Activated CD4-positive, alpha-beta T cell treated with anti-CD3 and anti-CD28 coated beads, Interleukin-2, amount 10 ng/mL, durations not matched to agents 24 days and 14 days (primary cell): ENCODE measurements at regions of chr20 and their contacts with region 1.

Region 1: GRCh38 chr20:18793625-18794427 is 19.8 kb upstream of the SCP2D1 start:
- DNase-seq: peak; percentile 95
- H3K4me3 Mint-ChIP-seq: peak overlapping the region; percentile 93
- H3K27ac Mint-ChIP-seq: peak overlapping the region; percentile 92
- H3K4me1 Mint-ChIP-seq: peaks cover 6% of the 10 kb centered on the region
- H3K27me3 Mint-ChIP-seq: peaks cover 6% of the 10 kb centered on the region

Region 2: DNA sequence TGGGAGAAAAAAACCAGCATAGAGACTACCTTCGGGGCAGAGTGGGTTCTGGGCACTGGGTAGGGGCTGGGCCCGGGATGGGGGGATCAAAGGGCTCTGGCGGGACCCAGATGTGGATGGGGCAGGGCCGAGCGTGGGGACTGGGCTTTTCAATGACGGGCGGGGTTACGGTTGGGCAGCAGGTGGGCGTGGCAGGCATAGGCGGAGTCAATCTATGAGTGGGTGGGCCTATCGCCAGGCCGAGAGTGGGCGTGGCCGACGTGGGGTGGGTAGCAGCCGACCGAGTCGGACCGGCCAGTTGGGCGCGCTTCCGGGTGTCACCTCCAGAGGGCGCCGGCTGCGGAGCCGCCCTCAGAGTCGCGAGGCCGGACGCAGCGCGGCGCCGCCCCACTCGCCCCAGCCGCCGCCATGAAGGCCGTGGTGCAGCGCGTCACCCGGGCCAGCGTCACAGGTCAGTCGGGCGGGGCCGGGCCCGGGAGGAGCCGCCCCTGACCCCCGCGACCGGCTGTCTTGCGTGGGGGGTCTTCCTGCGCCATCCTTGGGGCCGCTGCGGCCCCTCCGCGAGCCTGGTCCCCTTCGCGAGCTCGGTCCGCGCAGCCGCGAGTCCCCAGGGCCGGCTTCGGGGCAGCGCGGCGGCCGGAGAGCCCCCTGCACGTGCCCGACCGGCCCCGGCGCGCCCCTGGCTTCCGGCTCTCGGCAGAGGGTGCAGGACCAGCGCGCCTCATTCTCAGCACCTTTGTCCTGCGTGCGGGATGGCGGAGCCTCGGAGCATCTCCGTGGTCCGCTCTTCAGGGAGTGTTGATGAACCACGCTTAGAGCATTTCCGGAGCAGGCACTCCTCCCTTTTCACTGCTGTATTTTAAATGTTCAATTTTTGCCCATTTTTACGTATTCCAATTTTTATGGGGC is 205.9 kb before region 1 on chr20 and contains the start of gene DTD1:
- intact Hi-C with region 1: loop called (anchors 1 kb)
- DNase-seq: peak; percentile 96
- H3K4me3 Mint-ChIP-seq: peak within 1 kb of the TSS; percentile 94
- H3K27ac Mint-ChIP-seq: peak within 1 kb of the TSS; percentile 88
- H3K4me1 Mint-ChIP-seq: peaks cover 25% of the 10 kb centered on the region
- H3K27me3 Mint-ChIP-seq: peaks cover 7% of the 10 kb centered on the region
- total RNA-seq, gene DTD1: 49.2 and 49.9 TPM in 2 replicates